PC-3 (cell line): ENCODE measurements at regions of chr3 and their contacts with region 1.

Region 1: GRCh38 chr3:112642912-112643506 is 2.1 kb upstream of the CCDC80 start:
- DNase-seq: peak; percentile 95
- ATAC-seq: peak; percentile 66
- H3K4me3 ChIP-seq: peak overlapping the region; percentile 43
- H3K27ac ChIP-seq: no peak overlapping the region
- H3K4me1 ChIP-seq: peaks cover 73% of the 10 kb centered on the region
- H3K27me3 ChIP-seq: no peaks in the 10 kb centered on the region
- CTCF ChIP-seq: peak; percentile 97

Region 2: DNA sequence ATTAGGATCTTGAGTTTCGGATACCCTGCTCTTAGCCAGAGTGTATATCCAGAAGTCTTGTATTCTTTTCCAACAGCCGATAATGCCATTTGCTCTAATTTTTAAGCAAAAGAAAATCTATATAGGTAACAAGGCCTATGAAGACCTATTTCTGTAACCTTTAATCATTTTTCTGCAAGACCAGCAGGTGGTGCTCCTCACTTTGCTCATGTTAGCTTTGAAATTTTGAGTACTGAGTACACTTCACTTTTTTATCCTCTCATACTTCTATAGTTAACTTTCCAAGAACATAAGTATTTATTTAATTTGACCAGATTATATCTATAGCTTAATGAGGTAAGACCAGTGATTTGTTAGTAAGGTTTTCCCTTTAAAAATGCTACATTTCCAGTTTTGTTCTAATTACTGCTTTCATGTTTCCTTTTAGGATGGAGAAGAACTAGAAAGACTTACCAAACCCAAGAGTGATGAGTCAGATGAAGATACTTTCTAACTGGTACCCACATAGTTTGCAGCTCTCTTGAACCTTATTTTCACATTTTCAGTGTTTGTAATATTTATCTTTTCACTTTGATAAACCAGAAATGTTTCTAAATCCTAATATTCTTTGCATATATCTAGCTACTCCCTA is 60.6 kb before region 1 on chr3:
- CTCF ChIA-PET with region 1: interaction called, 9 read pairs
- POLR2A ChIA-PET with region 1: no interaction called
- intact Hi-C with region 1: loop called (anchors 1 kb)
- DNase-seq: peak; percentile 73
- ATAC-seq: peak; percentile 77
- H3K4me3 ChIP-seq: no peak overlapping the region
- H3K27ac ChIP-seq: no peak overlapping the region
- H3K4me1 ChIP-seq: peaks cover 3% of the 10 kb centered on the region; the same call in 1 of the 2 replicates
- H3K27me3 ChIP-seq: no peaks in the 10 kb centered on the region
- CTCF ChIP-seq: peak; percentile 91

Region 3: GRCh38 chr3:112629425-112629824 is 13.6 kb before region 1 on chr3:
- CTCF ChIA-PET with region 1: no interaction called
- POLR2A ChIA-PET with region 1: no interaction called
- intact Hi-C with region 1: no loop called
- DNase-seq: peak; percentile 80
- ATAC-seq: peak; percentile 98
- H3K4me3 ChIP-seq: no peak overlapping the region
- H3K27ac ChIP-seq: no peak overlapping the region
- H3K4me1 ChIP-seq: peaks cover 26% of the 10 kb centered on the region
- H3K27me3 ChIP-seq: no peaks in the 10 kb centered on the region
- CTCF ChIP-seq: no peak

Region 4: GRCh38 chr3:112676659-112677234 is 33.7 kb after region 1 on chr3:
- CTCF ChIA-PET with region 1: interaction called, 5 read pairs
- POLR2A ChIA-PET with region 1: no interaction called
- intact Hi-C with region 1: loop called (anchors 1 kb)
- DNase-seq: peak; percentile 98
- ATAC-seq: peak; percentile 98
- H3K4me3 ChIP-seq: peak overlapping the region; percentile 24; the same call in 1 of the 2 replicates
- H3K27ac ChIP-seq: peak overlapping the region; percentile 88
- H3K4me1 ChIP-seq: peaks cover 52% of the 10 kb centered on the region
- H3K27me3 ChIP-seq: no peaks in the 10 kb centered on the region
- CTCF ChIP-seq: no peak

Region 5: GRCh38 chr3:112734718-112735350 is 91.8 kb after region 1 on chr3:
- CTCF ChIA-PET with region 1: interaction called, 11 read pairs
- POLR2A ChIA-PET with region 1: no interaction called
- intact Hi-C with region 1: loop called (anchors 1 kb)
- DNase-seq: peak; percentile 89
- ATAC-seq: peak; percentile 71
- H3K4me3 ChIP-seq: no peak overlapping the region
- H3K27ac ChIP-seq: no peak overlapping the region
- H3K4me1 ChIP-seq: peaks cover 33% of the 10 kb centered on the region
- H3K27me3 ChIP-seq: no peaks in the 10 kb centered on the region
- CTCF ChIP-seq: peak; percentile 92

Region 6: DNA sequence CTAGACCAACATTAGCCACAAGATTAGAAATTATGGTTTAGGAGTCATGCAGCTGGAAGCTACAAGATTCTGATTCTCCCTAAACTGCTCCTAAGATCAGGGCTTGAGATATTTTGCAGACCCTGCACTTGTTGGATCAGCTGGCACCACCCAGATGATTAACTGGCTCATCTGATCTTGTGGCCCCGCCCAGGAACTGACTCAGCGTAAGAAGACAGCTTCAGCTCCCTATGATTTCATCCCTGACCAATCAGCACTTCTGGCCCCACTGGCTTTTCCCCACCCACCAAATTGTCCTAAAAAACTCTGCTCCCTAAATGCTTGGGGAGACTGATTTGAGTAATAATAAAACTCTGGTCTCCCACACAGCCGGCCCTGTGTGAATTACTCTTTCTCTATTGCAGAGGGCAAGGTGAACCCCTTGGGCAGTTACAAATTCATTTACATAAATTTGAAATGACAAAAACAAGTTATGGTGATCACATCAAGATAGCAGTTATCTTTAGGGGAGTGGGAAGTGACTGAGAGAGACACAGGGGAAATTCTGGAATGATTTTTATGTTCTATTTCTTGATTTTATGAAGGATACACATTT is 127.1 kb after region 1 on chr3:
- CTCF ChIA-PET with region 1: no interaction called
- POLR2A ChIA-PET with region 1: no interaction called
- intact Hi-C with region 1: no loop called
- DNase-seq: peak; percentile 69
- ATAC-seq: no peak
- H3K4me3 ChIP-seq: no peak overlapping the region
- H3K27ac ChIP-seq: no peak overlapping the region
- H3K4me1 ChIP-seq: peaks cover 42% of the 10 kb centered on the region
- H3K27me3 ChIP-seq: no peaks in the 10 kb centered on the region
- CTCF ChIP-seq: no peak

Region 7: GRCh38 chr3:112979240-112979832 is 336.3 kb after region 1 on chr3:
- CTCF ChIA-PET with region 1: no interaction called
- POLR2A ChIA-PET with region 1: no interaction called
- intact Hi-C with region 1: loop called (anchors 2 kb)
- DNase-seq: peak; percentile 62
- ATAC-seq: no peak; the same call in 1 of the 2 replicates
- H3K4me3 ChIP-seq: no peak overlapping the region
- H3K27ac ChIP-seq: no peak overlapping the region
- H3K4me1 ChIP-seq: peaks cover 2% of the 10 kb centered on the region
- H3K27me3 ChIP-seq: no peaks in the 10 kb centered on the region
- CTCF ChIP-seq: peak; percentile 87